H1 (cell line): ENCODE measurements at regions of chr7 and their contacts with region 1.

Region 1: GRCh38 chr7:22782616-22783232 is 39.9 kb downstream of the TOMM7 start:
- DNase-seq: peak in 1 of 2 experiments; percentile 88
- H3K4me3 ChIP-seq: no peak overlapping the region
- H3K27ac ChIP-seq: no peak overlapping the region
- H3K4me1 ChIP-seq: no peaks in the 10 kb centered on the region
- H3K27me3 ChIP-seq: no peaks in the 10 kb centered on the region
- CTCF ChIP-seq: peak; percentile 84 to 97 (median 94)
- EP300 ChIP-seq: no peak
- POLR2A ChIP-seq: no peak
- RAD21 ChIP-seq: peak; percentile 76 to 84

Region 2: DNA sequence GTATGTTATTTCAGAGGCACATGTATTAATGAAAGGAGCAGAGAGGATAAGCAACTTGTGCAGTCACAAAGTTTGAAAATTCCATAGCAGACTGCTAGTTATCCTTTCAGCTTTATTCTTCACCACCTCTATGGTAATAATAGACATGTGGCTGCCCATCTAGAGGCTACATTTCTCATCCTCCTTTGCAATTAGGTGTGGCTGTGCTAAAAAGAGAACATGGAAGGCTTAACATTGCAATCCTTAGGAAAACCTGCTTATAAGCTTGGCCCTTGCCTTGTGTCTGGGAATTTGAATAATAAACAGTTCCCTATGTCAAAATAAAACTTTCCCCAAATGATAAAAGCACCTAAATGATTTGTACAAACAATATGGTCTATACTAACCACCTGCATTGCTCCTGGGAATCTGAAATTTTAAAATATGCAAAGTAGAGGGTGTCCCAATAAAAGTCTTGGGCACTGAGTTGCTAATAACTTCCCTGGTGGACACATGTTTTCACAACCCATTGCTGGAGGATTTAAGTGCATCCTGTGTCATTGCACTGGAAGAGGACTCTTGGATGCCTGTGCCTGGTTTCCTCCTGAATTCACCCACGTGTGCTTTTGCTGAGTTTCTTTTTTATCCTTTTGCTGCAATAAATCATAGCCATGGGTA is 25.3 kb before region 1 on chr7:
- CTCF ChIA-PET with region 1: interaction called, 26 read pairs
- POLR2A ChIA-PET with region 1: no interaction called
- DNase-seq: no peak
- H3K4me3 ChIP-seq: no peak overlapping the region
- H3K27ac ChIP-seq: no peak overlapping the region
- H3K4me1 ChIP-seq: no peaks in the 10 kb centered on the region
- H3K27me3 ChIP-seq: no peaks in the 10 kb centered on the region
- CTCF ChIP-seq: no peak
- EP300 ChIP-seq: no peak
- POLR2A ChIP-seq: no peak
- RAD21 ChIP-seq: no peak

Region 3: GRCh38 chr7:22765609-22766008 is 17.1 kb before region 1 on chr7:
- CTCF ChIA-PET with region 1: interaction called, 26 read pairs
- POLR2A ChIA-PET with region 1: no interaction called
- DNase-seq: no peak
- H3K4me3 ChIP-seq: no peak overlapping the region
- H3K27ac ChIP-seq: no peak overlapping the region
- H3K4me1 ChIP-seq: no peaks in the 10 kb centered on the region
- H3K27me3 ChIP-seq: no peaks in the 10 kb centered on the region
- CTCF ChIP-seq: no peak
- EP300 ChIP-seq: no peak
- POLR2A ChIP-seq: no peak
- RAD21 ChIP-seq: no peak

Region 4: GRCh38 chr7:22771194-22771871 is 11.4 kb before region 1 on chr7:
- CTCF ChIA-PET with region 1: interaction called, 26 read pairs
- POLR2A ChIA-PET with region 1: interaction called, 3 read pairs
- DNase-seq: no peak
- H3K4me3 ChIP-seq: no peak overlapping the region
- H3K27ac ChIP-seq: no peak overlapping the region
- H3K4me1 ChIP-seq: no peaks in the 10 kb centered on the region
- H3K27me3 ChIP-seq: no peaks in the 10 kb centered on the region
- CTCF ChIP-seq: no peak
- EP300 ChIP-seq: no peak
- POLR2A ChIP-seq: no peak
- RAD21 ChIP-seq: no peak